ENCODE measurements at regions of chr22 and their contacts with region 1.

Region 1: GRCh38 chr22:46355371-46355995 is 20.0 kb downstream of the TRMU start:
- DNase-seq: peak in 41 of 42 donors; percentile 35 to 89 (median 74)

Region 2: GRCh38 chr22:46202897-46203600 is 152.4 kb before region 1 on chr22:
- intact Hi-C with region 1: no loop called
- DNase-seq: no peak

Region 3: DNA sequence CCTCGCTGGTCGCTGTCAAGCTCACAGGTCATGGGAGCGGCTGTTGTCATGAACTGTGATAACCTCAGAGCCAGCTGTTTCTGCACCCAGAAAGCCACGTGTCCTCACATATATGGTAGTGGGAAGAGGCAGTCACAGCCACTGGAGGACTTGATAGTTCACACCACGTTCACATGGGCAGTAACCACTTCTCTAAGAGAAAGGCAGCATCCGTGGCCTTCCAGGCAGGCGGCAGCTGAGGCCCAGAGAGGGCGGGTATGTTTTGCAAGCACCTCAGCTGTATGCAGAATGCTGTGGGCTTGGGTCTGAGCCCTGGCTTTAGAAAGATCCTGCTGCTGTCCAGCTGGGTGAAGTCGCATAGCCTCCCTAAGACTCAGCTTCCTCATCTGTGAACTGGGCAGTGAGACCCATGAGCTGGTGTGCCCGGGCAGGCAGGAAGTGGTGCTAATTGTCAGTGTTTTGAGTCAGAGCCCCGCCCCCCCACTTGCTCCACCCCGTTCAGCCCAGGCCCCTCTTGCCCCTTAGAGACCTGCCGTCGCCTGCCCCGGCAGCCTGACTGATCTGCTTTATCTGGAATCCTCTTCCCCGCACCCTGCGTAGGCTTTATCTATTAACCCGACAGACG is 74.4 kb before region 1 on chr22:
- intact Hi-C with region 1: no loop called
- DNase-seq: peak in 36 of 42 donors; percentile 23 to 77 (median 54)

Region 4: DNA sequence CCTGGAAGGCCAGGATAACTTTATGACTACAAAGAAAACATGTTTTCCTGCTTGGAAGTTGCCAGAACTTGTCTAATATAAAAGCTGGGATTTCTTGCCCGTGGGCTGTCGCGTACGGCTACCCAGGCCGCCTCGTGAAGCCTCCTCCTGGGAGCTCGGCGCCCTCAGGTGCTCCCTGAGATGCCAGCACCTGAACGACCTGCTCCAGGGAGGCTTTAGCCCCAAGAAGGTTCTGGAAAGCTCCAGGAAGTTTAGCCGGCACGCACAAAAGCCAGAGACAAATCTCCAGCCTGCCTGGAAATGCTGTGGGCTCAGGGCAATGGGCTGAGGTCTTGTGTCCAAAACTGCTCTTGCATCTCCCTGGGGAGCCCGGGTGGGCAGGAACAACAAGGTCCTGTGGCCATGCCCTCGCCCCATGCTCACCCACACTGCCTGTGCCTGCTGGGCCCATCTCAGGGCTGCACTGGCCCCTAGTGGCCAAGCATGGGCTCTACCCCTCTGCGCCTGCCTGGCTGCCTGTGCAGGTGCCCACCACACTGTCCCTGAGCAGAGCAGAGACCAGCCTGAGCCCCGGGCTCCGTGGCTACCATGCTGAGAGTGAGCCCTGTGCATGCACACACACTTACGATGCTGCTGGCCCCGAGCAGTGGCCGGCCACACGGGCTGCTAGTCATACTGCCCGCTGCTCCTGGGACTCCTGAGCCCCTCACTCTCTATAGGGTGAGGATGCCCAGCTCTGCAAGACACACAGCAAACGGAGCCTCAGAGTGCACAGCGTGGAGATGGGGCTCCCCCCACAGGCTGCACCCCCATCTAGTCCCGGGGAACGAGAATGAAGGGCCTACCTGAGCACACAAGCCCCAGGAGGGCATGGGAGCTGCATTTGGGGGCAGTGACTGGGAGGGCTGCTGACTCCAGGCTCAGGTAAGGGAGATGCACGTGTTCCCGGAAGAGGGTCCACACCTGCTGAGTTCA is 186.8 kb after region 1 on chr22:
- intact Hi-C with region 1: loop called (anchors 2 kb)
- DNase-seq: peak; percentile 56 to 88 (median 74)